Activated CD4-positive, alpha-beta memory T cell treated with anti-CD3 and anti-CD28 coated beads, Interleukin-2, amount 10 ng/mL, durations not matched to agents 7 days and 5 days (primary cell): ENCODE measurements at regions of chr13 and their contacts with region 1.

Region 1: GRCh38 chr13:46295491-46296114 is 83.9 kb downstream of the LRRC63 start:
- DNase-seq: peak; percentile 82
- H3K4me3 Mint-ChIP-seq: peak overlapping the region; percentile 59
- H3K27ac Mint-ChIP-seq: peak overlapping the region; percentile 98
- H3K4me1 Mint-ChIP-seq: peaks cover 41% of the 10 kb centered on the region
- H3K27me3 Mint-ChIP-seq: no peaks in the 10 kb centered on the region

Region 2: DNA sequence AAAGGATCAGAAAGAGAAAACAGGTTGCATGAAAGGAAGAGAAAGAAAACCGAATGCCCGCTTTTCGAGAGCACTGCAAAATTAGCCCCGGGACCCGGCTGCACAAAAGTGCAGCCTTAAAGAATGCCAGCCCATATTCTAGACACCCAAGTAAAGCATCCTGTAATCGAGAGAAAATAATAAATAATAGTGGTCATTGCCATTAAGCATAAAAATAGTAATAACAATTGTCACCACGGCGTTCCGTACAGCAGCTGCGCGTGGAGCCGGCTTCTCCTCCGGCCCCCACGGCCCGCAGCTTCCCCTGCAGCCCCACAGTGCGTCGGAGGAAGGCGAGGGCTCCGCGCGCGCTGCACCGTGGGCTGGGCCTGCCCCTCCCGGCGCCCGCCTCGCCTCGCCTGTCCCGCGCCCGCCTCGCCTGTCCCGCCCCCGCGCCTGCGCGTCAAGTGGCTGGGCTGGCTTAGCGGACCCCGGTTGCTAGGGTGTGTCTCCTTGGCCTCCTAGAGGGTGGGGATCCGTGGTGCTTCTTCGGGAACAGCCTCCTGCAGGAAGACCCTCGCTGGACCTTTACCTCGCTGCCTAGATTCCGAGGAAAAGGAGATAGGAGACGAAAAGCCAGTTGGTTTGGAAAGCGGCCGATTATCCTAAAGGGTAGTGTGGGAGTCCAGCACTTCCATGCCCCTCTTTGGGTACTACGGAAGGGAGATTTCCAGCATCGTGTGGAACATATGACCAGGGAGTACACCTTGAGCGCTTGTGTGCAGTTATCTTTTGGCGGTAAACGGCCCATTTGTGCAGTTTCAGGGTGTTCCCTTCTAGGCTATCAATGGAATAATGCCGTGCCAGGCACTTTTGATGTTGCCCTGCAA is 83.9 kb before region 1 on chr13 and contains the start of gene LRRC63:
- CTCF ChIA-PET with region 1: interaction called, 6 read pairs
- POLR2A ChIA-PET with region 1: interaction called, 10 read pairs
- DNase-seq: peak; percentile 89
- H3K4me3 Mint-ChIP-seq: peak within 1 kb of the TSS; percentile 93
- H3K27ac Mint-ChIP-seq: peak within 1 kb of the TSS; percentile 87
- H3K4me1 Mint-ChIP-seq: peaks cover 33% of the 10 kb centered on the region
- H3K27me3 Mint-ChIP-seq: no peaks in the 10 kb centered on the region
- total RNA-seq, gene LRRC63: 0.83 to 1.1 TPM

Region 3: GRCh38 chr13:46327246-46327645 is 31.6 kb after region 1 on chr13:
- CTCF ChIA-PET with region 1: no interaction called
- POLR2A ChIA-PET with region 1: no interaction called
- DNase-seq: no peak
- H3K4me3 Mint-ChIP-seq: no peak overlapping the region
- H3K27ac Mint-ChIP-seq: no peak overlapping the region
- H3K4me1 Mint-ChIP-seq: peaks cover 10% of the 10 kb centered on the region
- H3K27me3 Mint-ChIP-seq: peaks cover 4% of the 10 kb centered on the region

Region 4: GRCh38 chr13:46389457-46390451 is 94.2 kb after region 1 on chr13:
- CTCF ChIA-PET with region 1: no interaction called
- POLR2A ChIA-PET with region 1: no interaction called
- DNase-seq: peak; percentile 19
- H3K4me3 Mint-ChIP-seq: no peak overlapping the region
- H3K27ac Mint-ChIP-seq: peak overlapping the region; percentile 10
- H3K4me1 Mint-ChIP-seq: peaks cover 32% of the 10 kb centered on the region
- H3K27me3 Mint-ChIP-seq: peaks cover 31% of the 10 kb centered on the region